Panc1 (cell line): ENCODE measurements at regions of chr2 and their contacts with region 1.

Region 1: GRCh38 chr2:221546505-221547225 is 25.4 kb downstream of the EPHA4 start:
- DNase-seq: no peak
- ATAC-seq: no peak
- H3K4me3 ChIP-seq: no peak overlapping the region
- H3K27ac ChIP-seq: no peak overlapping the region
- H3K4me1 ChIP-seq: no peaks in the 10 kb centered on the region
- H3K27me3 ChIP-seq: no peaks in the 10 kb centered on the region
- CTCF ChIP-seq: no peak

Region 2: GRCh38 chr2:221514307-221515040 is 32.2 kb before region 1 on chr2:
- CTCF ChIA-PET with region 1: no interaction called
- POLR2A ChIA-PET with region 1: interaction called, 13 read pairs
- in situ Hi-C with region 1: no loop called
- intact Hi-C with region 1: no loop called
- DNase-seq: no peak
- ATAC-seq: no peak
- H3K4me3 ChIP-seq: no peak overlapping the region
- H3K27ac ChIP-seq: no peak overlapping the region
- H3K4me1 ChIP-seq: no peaks in the 10 kb centered on the region
- H3K27me3 ChIP-seq: no peaks in the 10 kb centered on the region
- CTCF ChIP-seq: no peak

Region 3: DNA sequence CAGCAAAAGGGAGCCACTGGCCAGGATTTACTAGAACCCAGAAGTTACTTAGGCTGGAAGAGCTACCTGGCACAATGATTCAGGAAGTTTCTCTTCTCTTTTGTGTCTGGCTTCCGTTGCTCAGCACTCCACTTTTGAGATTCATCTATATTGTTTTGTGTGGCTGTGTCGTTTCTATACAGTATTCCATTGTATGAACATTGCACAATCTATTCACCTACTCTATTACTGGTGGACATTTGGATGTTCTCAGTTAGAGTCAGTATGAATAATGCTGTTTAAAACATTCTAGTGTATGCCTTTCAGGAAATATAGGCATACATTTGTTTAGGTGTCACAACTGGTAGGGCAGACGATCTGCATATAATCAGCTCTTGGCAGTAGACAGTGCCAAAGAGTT is 61.8 kb after region 1 on chr2:
- CTCF ChIA-PET with region 1: no interaction called
- POLR2A ChIA-PET with region 1: interaction called, 17 read pairs
- in situ Hi-C with region 1: no loop called
- intact Hi-C with region 1: no loop called
- DNase-seq: no peak
- ATAC-seq: no peak
- H3K4me3 ChIP-seq: no peak overlapping the region
- H3K27ac ChIP-seq: no peak overlapping the region
- H3K4me1 ChIP-seq: no peaks in the 10 kb centered on the region
- H3K27me3 ChIP-seq: no peaks in the 10 kb centered on the region
- CTCF ChIP-seq: no peak